ENCODE measurements at regions of chr3 and their contacts with region 1.

Region 1: GRCh38 chr3:105366326-105367062 is at the start of gene ALCAM:
- DNase-seq: peak; percentile 99
- H3K4me3 ChIP-seq: peak within 1 kb of the TSS; percentile 75 to 91 (median 82)
- H3K27ac ChIP-seq: peak within 1 kb of the TSS; percentile 98
- H3K4me1 ChIP-seq: peaks cover 39% of the 10 kb centered on the region
- H3K27me3 ChIP-seq: no peaks in the 10 kb centered on the region
- CTCF ChIP-seq: peak; percentile 55 to 82
- total RNA-seq, gene ALCAM: 67.6 to 88.4 TPM

Region 2: GRCh38 chr3:103991461-103992115 is 1374.9 kb before region 1 on chr3:
- CTCF ChIA-PET with region 1: no interaction called
- dilution Hi-C with region 1: no loop called
- in situ Hi-C with region 1: no loop called
- intact Hi-C with region 1: loop called (anchors 5 kb)
- DNase-seq: no peak
- H3K4me3 ChIP-seq: no peak overlapping the region
- H3K27ac ChIP-seq: no peak overlapping the region
- H3K4me1 ChIP-seq: no peaks in the 10 kb centered on the region
- H3K27me3 ChIP-seq: no peaks in the 10 kb centered on the region
- CTCF ChIP-seq: peak; percentile 62 to 65

Region 3: DNA sequence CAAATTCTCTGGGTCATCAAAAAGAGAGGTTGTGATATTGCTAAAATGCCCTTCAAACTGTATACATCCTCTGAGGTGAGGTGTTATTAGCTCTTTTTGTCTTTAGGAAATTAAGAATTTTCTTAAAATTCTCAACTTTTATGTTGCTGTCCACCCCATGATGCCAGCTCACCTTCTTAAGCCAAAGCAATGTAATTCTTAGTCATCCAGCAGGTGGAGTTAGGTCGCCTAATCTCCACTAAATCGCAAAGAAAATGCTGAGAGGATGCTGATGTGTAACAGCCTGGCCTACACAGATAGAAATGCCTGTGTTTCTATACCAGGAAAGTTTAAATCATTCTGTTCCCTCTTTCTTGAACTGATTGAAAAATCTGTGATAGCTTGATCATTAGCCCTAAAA is 769.9 kb before region 1 on chr3:
- CTCF ChIA-PET with region 1: interaction called, 10 read pairs
- dilution Hi-C with region 1: no loop called
- in situ Hi-C with region 1: loop called in 1 of 2 experiments (anchors 10 kb)
- intact Hi-C with region 1: loop called (anchors 1 kb)
- DNase-seq: peak; percentile 42
- H3K4me3 ChIP-seq: no peak overlapping the region
- H3K27ac ChIP-seq: no peak overlapping the region
- H3K4me1 ChIP-seq: no peaks in the 10 kb centered on the region
- H3K27me3 ChIP-seq: no peaks in the 10 kb centered on the region
- CTCF ChIP-seq: peak; percentile 60 to 68

Region 4: DNA sequence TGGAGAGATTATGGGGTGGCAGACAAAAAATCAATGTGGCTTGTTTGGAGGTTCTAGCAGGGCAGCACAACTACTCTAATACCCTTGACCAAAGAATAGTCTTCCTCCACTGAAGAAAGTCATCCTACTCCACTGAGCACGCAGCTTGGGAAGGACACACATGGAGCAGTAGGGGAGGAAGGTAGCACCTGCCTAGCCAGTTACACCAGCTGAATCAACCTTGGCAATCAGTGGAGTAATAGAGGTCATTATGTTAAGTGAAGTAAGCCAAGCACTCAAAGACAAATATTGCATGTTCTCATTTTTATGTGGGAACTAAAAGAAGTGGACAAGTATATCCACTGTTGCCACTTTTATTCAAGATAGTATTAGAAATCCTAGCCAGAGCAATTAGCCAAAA is 555.6 kb before region 1 on chr3:
- CTCF ChIA-PET with region 1: no interaction called
- dilution Hi-C with region 1: no loop called
- in situ Hi-C with region 1: no loop called
- intact Hi-C with region 1: no loop called
- DNase-seq: no peak
- H3K4me3 ChIP-seq: no peak overlapping the region
- H3K27ac ChIP-seq: no peak overlapping the region
- H3K4me1 ChIP-seq: no peaks in the 10 kb centered on the region
- H3K27me3 ChIP-seq: no peaks in the 10 kb centered on the region
- CTCF ChIP-seq: no peak

Region 5: DNA sequence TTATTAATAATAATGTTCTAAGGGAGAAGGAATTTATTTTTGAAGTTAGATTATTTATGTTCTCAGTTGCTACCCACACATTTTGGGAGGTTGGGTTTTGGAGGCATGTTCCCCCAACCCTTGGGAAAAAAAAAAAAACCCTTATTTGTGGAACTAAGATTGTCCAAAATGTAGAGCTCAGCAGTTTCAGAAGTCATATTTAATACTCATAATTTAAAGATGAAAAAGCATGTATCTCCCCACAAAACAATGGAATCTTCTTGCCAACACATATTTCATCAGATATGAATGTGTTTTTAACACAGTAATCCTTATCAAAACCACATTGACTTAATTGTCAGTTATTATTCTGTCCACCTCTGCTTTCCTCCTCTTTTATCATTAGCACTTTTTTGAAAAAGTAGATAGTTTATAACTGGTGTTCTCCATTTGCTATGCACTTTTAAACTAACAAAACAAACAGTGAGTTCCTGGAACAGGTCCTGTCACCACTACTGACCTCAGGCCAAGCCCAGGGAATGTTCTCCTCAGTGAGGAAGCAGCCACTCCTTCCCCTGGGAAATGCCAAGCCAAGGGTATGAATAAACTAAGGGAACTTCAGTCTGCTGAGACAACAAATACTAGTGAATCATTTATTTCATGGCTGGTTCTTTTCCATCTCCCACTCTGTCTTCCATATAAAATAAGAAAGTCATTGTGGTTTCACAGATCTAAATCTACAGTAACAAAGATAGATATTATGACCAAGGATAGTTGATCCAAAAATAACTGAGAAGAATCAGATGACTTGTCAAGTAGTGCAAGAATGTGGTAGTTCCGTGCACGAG is 414.1 kb before region 1 on chr3:
- CTCF ChIA-PET with region 1: interaction called, 4 read pairs
- dilution Hi-C with region 1: no loop called
- in situ Hi-C with region 1: no loop called
- intact Hi-C with region 1: loop called (anchors 2 kb)
- DNase-seq: peak; percentile 91
- H3K4me3 ChIP-seq: no peak overlapping the region
- H3K27ac ChIP-seq: peak overlapping the region; percentile 79
- H3K4me1 ChIP-seq: peaks cover 8% of the 10 kb centered on the region
- H3K27me3 ChIP-seq: no peaks in the 10 kb centered on the region
- CTCF ChIP-seq: no peak

Region 6: GRCh38 chr3:105118905-105119304 is 247.6 kb before region 1 on chr3:
- CTCF ChIA-PET with region 1: no interaction called
- dilution Hi-C with region 1: no loop called
- in situ Hi-C with region 1: no loop called
- intact Hi-C with region 1: loop called (anchors 10 kb)
- DNase-seq: peak; percentile 51
- H3K4me3 ChIP-seq: no peak overlapping the region
- H3K27ac ChIP-seq: no peak overlapping the region
- H3K4me1 ChIP-seq: no peaks in the 10 kb centered on the region
- H3K27me3 ChIP-seq: peaks cover 3% of the 10 kb centered on the region
- CTCF ChIP-seq: no peak

Region 7: DNA sequence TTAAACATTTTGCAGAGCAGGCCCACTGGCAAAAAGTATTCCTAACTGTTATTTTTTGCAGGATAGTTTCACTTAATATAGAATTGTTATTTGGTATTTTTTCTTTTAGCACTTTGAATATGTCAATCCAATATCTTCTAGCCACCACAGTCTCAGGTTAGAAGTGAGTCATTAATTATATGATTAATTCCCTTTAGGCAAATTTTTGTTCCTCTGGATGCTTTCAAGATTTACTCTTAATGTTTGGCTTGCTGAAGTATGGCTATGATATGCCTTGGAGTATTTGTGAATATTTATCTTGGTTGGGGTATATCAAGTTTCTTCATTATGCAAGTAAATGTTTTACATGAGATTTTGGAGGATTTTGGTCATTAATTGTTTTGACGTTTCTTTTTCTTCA is 151.9 kb before region 1 on chr3:
- CTCF ChIA-PET with region 1: no interaction called
- dilution Hi-C with region 1: no loop called
- in situ Hi-C with region 1: no loop called
- intact Hi-C with region 1: no loop called
- DNase-seq: peak; percentile 11
- H3K4me3 ChIP-seq: no peak overlapping the region
- H3K27ac ChIP-seq: no peak overlapping the region
- H3K4me1 ChIP-seq: no peaks in the 10 kb centered on the region
- H3K27me3 ChIP-seq: no peaks in the 10 kb centered on the region
- CTCF ChIP-seq: no peak

Region 8: GRCh38 chr3:105402287-105402801 is 35.9 kb after region 1 on chr3:
- CTCF ChIA-PET with region 1: no interaction called
- dilution Hi-C with region 1: loop called (anchors 5 kb)
- in situ Hi-C with region 1: no loop called
- intact Hi-C with region 1: loop called (anchors 1 kb)
- DNase-seq: peak; percentile 98
- H3K4me3 ChIP-seq: peak overlapping the region in 2 of 3 experiments; percentile 17 to 29
- H3K27ac ChIP-seq: peak overlapping the region; percentile 98
- H3K4me1 ChIP-seq: peaks cover 27% of the 10 kb centered on the region
- H3K27me3 ChIP-seq: no peaks in the 10 kb centered on the region
- CTCF ChIP-seq: no peak

Region 9: GRCh38 chr3:107117922-107118536 is 1751.5 kb after region 1 on chr3:
- CTCF ChIA-PET with region 1: no interaction called
- dilution Hi-C with region 1: no loop called
- in situ Hi-C with region 1: no loop called
- intact Hi-C with region 1: loop called (anchors 2 kb)
- DNase-seq: peak; percentile 41
- H3K4me3 ChIP-seq: no peak overlapping the region
- H3K27ac ChIP-seq: no peak overlapping the region
- H3K4me1 ChIP-seq: no peaks in the 10 kb centered on the region
- H3K27me3 ChIP-seq: no peaks in the 10 kb centered on the region
- CTCF ChIP-seq: peak; percentile 56

Measured in mammary epithelial cell (primary cell).